HCT116 (cell line): ENCODE measurements at regions of chr11 and their contacts with region 1.

Region 1: GRCh38 chr11:109939166-109939810 is 153.9 kb upstream of the ZC3H12C start:
- DNase-seq: peak; percentile 85
- ATAC-seq: peak; percentile 96
- H3K4me3 ChIP-seq: no peak overlapping the region
- H3K27ac ChIP-seq: no peak overlapping the region
- H3K4me1 ChIP-seq: peaks cover 0 to 21% of the 10 kb centered on the region in 2 experiments; a peak in 3 of 4 replicates
- H3K27me3 ChIP-seq: no peaks in the 10 kb centered on the region
- CTCF ChIP-seq: peak; percentile 71 to 82 (median 80)
- POLR2A ChIP-seq: no peak
- RAD21 ChIP-seq: peak; percentile 99

Region 2: GRCh38 chr11:108474664-108475485 is 1464.4 kb before region 1 on chr11:
- CTCF ChIA-PET with region 1: no interaction called
- POLR2A ChIA-PET with region 1: no interaction called
- RAD21 ChIA-PET with region 1: no interaction called
- intact Hi-C with region 1: no loop called
- DNase-seq: no peak
- ATAC-seq: no peak
- H3K4me3 ChIP-seq: no peak overlapping the region
- H3K27ac ChIP-seq: no peak overlapping the region
- H3K4me1 ChIP-seq: no peaks in the 10 kb centered on the region
- H3K27me3 ChIP-seq: no peaks in the 10 kb centered on the region
- CTCF ChIP-seq: no peak
- POLR2A ChIP-seq: no peak
- RAD21 ChIP-seq: no peak

Region 3: DNA sequence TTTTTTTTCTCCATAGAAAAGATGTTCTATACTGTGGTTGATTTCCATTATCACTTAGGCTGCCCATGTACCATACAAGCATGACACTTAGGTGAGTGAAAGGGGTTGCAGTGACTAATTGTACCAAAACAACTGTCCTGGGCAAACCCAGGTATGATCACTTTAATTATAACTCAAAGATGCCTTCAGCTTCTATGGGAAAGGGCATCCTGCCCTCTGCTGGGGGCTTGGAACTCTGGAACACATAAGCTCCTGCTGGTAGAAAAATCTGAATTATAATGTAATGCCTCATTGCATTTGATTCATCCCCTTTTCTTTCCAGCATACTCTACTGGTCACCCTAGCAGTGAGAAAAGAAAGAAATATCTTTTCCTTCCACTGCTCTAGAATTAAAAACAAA is 1068.1 kb before region 1 on chr11:
- CTCF ChIA-PET with region 1: no interaction called
- POLR2A ChIA-PET with region 1: no interaction called
- RAD21 ChIA-PET with region 1: no interaction called
- intact Hi-C with region 1: loop called (anchors 10 kb)
- DNase-seq: no peak
- ATAC-seq: peak; percentile 75
- H3K4me3 ChIP-seq: no peak overlapping the region
- H3K27ac ChIP-seq: peak overlapping the region; percentile 75
- H3K4me1 ChIP-seq: peaks cover 30 to 42% of the 10 kb centered on the region in 2 experiments
- H3K27me3 ChIP-seq: no peaks in the 10 kb centered on the region
- CTCF ChIP-seq: peak; percentile 48 to 72 (median 70); a peak in 5 of 6 replicates
- POLR2A ChIP-seq: no peak
- RAD21 ChIP-seq: peak; percentile 80

Region 4: GRCh38 chr11:109707411-109707810 is 231.9 kb before region 1 on chr11:
- CTCF ChIA-PET with region 1: no interaction called
- POLR2A ChIA-PET with region 1: no interaction called
- RAD21 ChIA-PET with region 1: no interaction called
- intact Hi-C with region 1: loop called (anchors 10 kb)
- DNase-seq: no peak
- ATAC-seq: no peak
- H3K4me3 ChIP-seq: no peak overlapping the region
- H3K27ac ChIP-seq: no peak overlapping the region
- H3K4me1 ChIP-seq: no peaks in the 10 kb centered on the region
- H3K27me3 ChIP-seq: no peaks in the 10 kb centered on the region
- CTCF ChIP-seq: no peak
- POLR2A ChIP-seq: no peak
- RAD21 ChIP-seq: no peak

Region 5: GRCh38 chr11:109864834-109865547 is 74.3 kb before region 1 on chr11:
- CTCF ChIA-PET with region 1: interaction called, 11 read pairs
- POLR2A ChIA-PET with region 1: no interaction called
- RAD21 ChIA-PET with region 1: no interaction called
- intact Hi-C with region 1: no loop called
- DNase-seq: no peak
- ATAC-seq: peak; percentile 7
- H3K4me3 ChIP-seq: no peak overlapping the region; a peak in 1 of 4 replicates
- H3K27ac ChIP-seq: peak overlapping the region; percentile 58; the same call in 1 of the 2 replicates
- H3K4me1 ChIP-seq: peaks cover 18 to 57% of the 10 kb centered on the region in 2 experiments
- H3K27me3 ChIP-seq: no peaks in the 10 kb centered on the region
- CTCF ChIP-seq: no peak
- POLR2A ChIP-seq: no peak
- RAD21 ChIP-seq: no peak

Region 6: DNA sequence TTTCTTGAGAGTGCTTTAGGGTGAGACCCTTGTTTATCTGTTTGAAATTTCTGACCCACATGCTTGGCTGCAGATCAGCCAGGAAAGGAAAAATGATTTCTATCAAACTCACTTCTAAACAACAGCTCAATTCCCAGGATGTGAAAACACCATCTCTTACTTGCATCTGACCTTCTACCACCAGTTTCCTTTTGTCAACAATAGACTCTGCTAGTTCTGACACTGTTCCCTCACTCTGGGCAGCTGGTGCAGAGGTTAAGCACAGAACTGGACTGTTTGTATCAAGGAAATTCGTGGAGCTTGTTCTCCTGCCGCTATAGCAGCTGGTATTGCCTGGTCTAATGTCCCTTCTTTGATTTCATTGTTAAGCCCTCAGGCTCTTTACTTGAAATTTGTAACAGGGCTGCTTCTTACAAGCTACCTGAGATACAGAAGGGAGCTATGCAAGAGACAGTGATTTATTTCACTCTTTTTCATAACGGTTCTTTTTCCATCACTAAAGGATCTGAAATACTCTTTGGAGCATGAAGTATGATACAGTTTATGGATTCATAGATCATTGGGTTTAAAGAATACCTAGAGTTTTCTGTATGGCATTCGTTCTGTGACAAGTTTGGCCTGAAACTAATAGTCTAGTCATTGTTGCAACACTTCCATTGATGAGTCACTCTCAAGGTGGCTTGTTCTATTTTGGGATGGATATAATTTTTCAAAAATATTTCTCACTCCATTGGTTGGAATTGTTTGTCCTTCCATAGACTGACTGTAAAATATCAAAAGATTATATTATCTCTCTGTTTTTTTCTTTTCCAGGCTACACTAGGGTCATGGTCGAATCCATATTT is 24.3 kb before region 1 on chr11:
- CTCF ChIA-PET with region 1: no interaction called
- POLR2A ChIA-PET with region 1: no interaction called
- RAD21 ChIA-PET with region 1: no interaction called
- intact Hi-C with region 1: no loop called
- DNase-seq: no peak
- ATAC-seq: peak; percentile 40
- H3K4me3 ChIP-seq: no peak overlapping the region
- H3K27ac ChIP-seq: peak overlapping the region; percentile 3; the same call in 1 of the 2 replicates
- H3K4me1 ChIP-seq: peaks cover 15 to 25% of the 10 kb centered on the region in 2 experiments
- H3K27me3 ChIP-seq: no peaks in the 10 kb centered on the region
- CTCF ChIP-seq: no peak
- POLR2A ChIP-seq: no peak
- RAD21 ChIP-seq: no peak

Region 7: DNA sequence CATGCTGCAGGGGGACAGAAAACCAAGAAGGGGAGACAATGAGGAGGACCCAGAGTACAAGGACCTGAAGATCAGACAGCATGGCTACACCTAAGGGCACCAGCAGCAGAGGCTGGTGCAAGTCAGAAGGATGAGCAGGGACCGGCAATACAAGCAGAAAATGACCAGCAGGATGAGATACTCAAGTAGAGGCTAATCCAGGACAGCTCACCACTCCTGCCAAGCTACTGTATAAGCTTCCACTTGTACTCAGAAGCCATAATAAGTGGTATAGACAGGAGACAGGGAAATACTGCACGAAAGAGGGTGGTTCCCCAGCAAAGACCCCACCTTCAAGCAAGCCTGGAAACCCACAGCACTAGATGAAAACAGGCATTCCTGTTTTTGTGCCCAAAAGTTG is 15.2 kb after region 1 on chr11:
- CTCF ChIA-PET with region 1: no interaction called
- POLR2A ChIA-PET with region 1: no interaction called
- RAD21 ChIA-PET with region 1: no interaction called
- intact Hi-C with region 1: no loop called
- DNase-seq: no peak
- ATAC-seq: no peak
- H3K4me3 ChIP-seq: no peak overlapping the region
- H3K27ac ChIP-seq: no peak overlapping the region
- H3K4me1 ChIP-seq: no peaks in the 10 kb centered on the region
- H3K27me3 ChIP-seq: no peaks in the 10 kb centered on the region
- CTCF ChIP-seq: no peak
- POLR2A ChIP-seq: no peak
- RAD21 ChIP-seq: no peak